Activated CD4-positive, alpha-beta memory T cell treated with anti-CD3 and anti-CD28 coated beads for 36 hours (primary cell): ENCODE measurements at regions of chrX and their contacts with region 1.

Region 1: GRCh38 chrX:46903458-46904242 is 8.6 kb upstream of the JADE3 start:
- DNase-seq: peak; percentile 73
- H3K4me3 Mint-ChIP-seq: peak overlapping the region; percentile 60
- H3K27ac Mint-ChIP-seq: no peak overlapping the region
- H3K4me1 Mint-ChIP-seq: no peaks in the 10 kb centered on the region
- H3K27me3 Mint-ChIP-seq: no peaks in the 10 kb centered on the region

Region 2: GRCh38 chrX:46978341-46979291 is 75.0 kb after region 1 on chrX:
- CTCF ChIA-PET with region 1: interaction called, 23 read pairs
- POLR2A ChIA-PET with region 1: no interaction called
- intact Hi-C with region 1: loop called (anchors 1 kb)
- DNase-seq: peak; percentile 83
- H3K4me3 Mint-ChIP-seq: no peak overlapping the region
- H3K27ac Mint-ChIP-seq: no peak overlapping the region
- H3K4me1 Mint-ChIP-seq: no peaks in the 10 kb centered on the region
- H3K27me3 Mint-ChIP-seq: no peaks in the 10 kb centered on the region

Region 3: GRCh38 chrX:47030339-47030738 is 126.7 kb after region 1 on chrX:
- CTCF ChIA-PET with region 1: interaction called, 10 read pairs
- POLR2A ChIA-PET with region 1: no interaction called
- intact Hi-C with region 1: loop called (anchors 2 kb)
- DNase-seq: no peak
- H3K4me3 Mint-ChIP-seq: no peak overlapping the region
- H3K27ac Mint-ChIP-seq: no peak overlapping the region
- H3K4me1 Mint-ChIP-seq: no peaks in the 10 kb centered on the region
- H3K27me3 Mint-ChIP-seq: no peaks in the 10 kb centered on the region

Region 4: GRCh38 chrX:47093248-47093647 is 189.6 kb after region 1 on chrX:
- CTCF ChIA-PET with region 1: interaction called, 14 read pairs
- POLR2A ChIA-PET with region 1: no interaction called
- intact Hi-C with region 1: loop called (anchors 2 kb)
- DNase-seq: no peak
- H3K4me3 Mint-ChIP-seq: no peak overlapping the region
- H3K27ac Mint-ChIP-seq: no peak overlapping the region
- H3K4me1 Mint-ChIP-seq: peaks cover 8% of the 10 kb centered on the region
- H3K27me3 Mint-ChIP-seq: no peaks in the 10 kb centered on the region